SK-N-SH (cell line): ENCODE measurements at regions of chr2 and their contacts with region 1.

Region 1: GRCh38 chr2:26144953-26145680 is 27.8 kb upstream of the GAREM2 start:
- DNase-seq: peak; percentile 85
- H3K4me3 ChIP-seq: no peak overlapping the region
- H3K27ac ChIP-seq: no peak overlapping the region
- H3K4me1 ChIP-seq: no peaks in the 10 kb centered on the region; a peak in 1 of 4 replicates
- H3K27me3 ChIP-seq: no peaks in the 10 kb centered on the region; the same call in 1 of the 2 replicates
- CTCF ChIP-seq: peak; percentile 96
- EP300 ChIP-seq: no peak
- RAD21 ChIP-seq: peak; percentile 100

Region 2: GRCh38 chr2:25851740-25852503 is 293.2 kb before region 1 on chr2:
- CTCF ChIA-PET with region 1: interaction called, 24 read pairs
- POLR2A ChIA-PET with region 1: no interaction called
- DNase-seq: peak; percentile 63
- H3K4me3 ChIP-seq: no peak overlapping the region
- H3K27ac ChIP-seq: peak overlapping the region in 1 of 2 experiments; percentile 33; a peak in 2 of 4 replicates
- H3K4me1 ChIP-seq: peaks cover 4 to 10% of the 10 kb centered on the region in 2 experiments; a peak in 3 of 4 replicates
- H3K27me3 ChIP-seq: no peaks in the 10 kb centered on the region
- CTCF ChIP-seq: peak; percentile 94
- EP300 ChIP-seq: no peak
- RAD21 ChIP-seq: peak; percentile 83

Region 3: GRCh38 chr2:25976983-25977741 is 168.0 kb before region 1 on chr2:
- CTCF ChIA-PET with region 1: interaction called, 13 read pairs
- POLR2A ChIA-PET with region 1: no interaction called
- DNase-seq: peak; percentile 65
- H3K4me3 ChIP-seq: peak overlapping the region; percentile 7 to 24; a peak in 3 of 4 replicates
- H3K27ac ChIP-seq: peak overlapping the region; percentile 50 to 67
- H3K4me1 ChIP-seq: peaks cover 51 to 53% of the 10 kb centered on the region in 2 experiments
- H3K27me3 ChIP-seq: no peaks in the 10 kb centered on the region
- CTCF ChIP-seq: no peak
- EP300 ChIP-seq: no peak
- RAD21 ChIP-seq: no peak

Region 4: GRCh38 chr2:25991965-25992364 is 153.2 kb before region 1 on chr2:
- CTCF ChIA-PET with region 1: interaction called, 96 read pairs
- POLR2A ChIA-PET with region 1: no interaction called
- DNase-seq: no peak
- H3K4me3 ChIP-seq: no peak overlapping the region
- H3K27ac ChIP-seq: no peak overlapping the region
- H3K4me1 ChIP-seq: no peaks in the 10 kb centered on the region; a peak in 1 of 4 replicates
- H3K27me3 ChIP-seq: no peaks in the 10 kb centered on the region
- CTCF ChIP-seq: no peak
- EP300 ChIP-seq: no peak
- RAD21 ChIP-seq: no peak

Region 5: GRCh38 chr2:26033818-26034636 is 111.1 kb before region 1 on chr2 and contains the start of gene RAB10:
- CTCF ChIA-PET with region 1: interaction called, 23 read pairs
- POLR2A ChIA-PET with region 1: no interaction called
- DNase-seq: peak; percentile 99
- H3K4me3 ChIP-seq: peak within 1 kb of the TSS; percentile 82 to 90
- H3K27ac ChIP-seq: peak within 1 kb of the TSS; percentile 91 to 94
- H3K4me1 ChIP-seq: peaks cover 4 to 11% of the 10 kb centered on the region in 2 experiments; a peak in 3 of 4 replicates
- H3K27me3 ChIP-seq: no peaks in the 10 kb centered on the region
- CTCF ChIP-seq: no peak
- EP300 ChIP-seq: 0 out of 4 replicates have a peak, but pooled peaks of 1 of the 2 experiments have one; percentile 7
- RAD21 ChIP-seq: 0 out of 2 replicates have a peak, but pooled peaks have one; percentile 7
- polyA plus RNA-seq, gene RAB10: 47.5 and 57.5 TPM in 2 replicates

Region 6: GRCh38 chr2:26099933-26100332 is 45.2 kb before region 1 on chr2:
- CTCF ChIA-PET with region 1: interaction called, 15 read pairs
- POLR2A ChIA-PET with region 1: no interaction called
- DNase-seq: no peak
- H3K4me3 ChIP-seq: no peak overlapping the region
- H3K27ac ChIP-seq: no peak overlapping the region
- H3K4me1 ChIP-seq: no peaks in the 10 kb centered on the region; a peak in 1 of 4 replicates
- H3K27me3 ChIP-seq: no peaks in the 10 kb centered on the region
- CTCF ChIP-seq: no peak
- EP300 ChIP-seq: no peak
- RAD21 ChIP-seq: no peak

Region 7: GRCh38 chr2:26126074-26126473 is 19.0 kb before region 1 on chr2:
- CTCF ChIA-PET with region 1: interaction called, 35 read pairs
- POLR2A ChIA-PET with region 1: no interaction called
- DNase-seq: no peak
- H3K4me3 ChIP-seq: no peak overlapping the region
- H3K27ac ChIP-seq: no peak overlapping the region
- H3K4me1 ChIP-seq: peaks cover 0 to 4% of the 10 kb centered on the region in 2 experiments; a peak in 1 of 4 replicates
- H3K27me3 ChIP-seq: no peaks in the 10 kb centered on the region
- CTCF ChIP-seq: no peak
- EP300 ChIP-seq: no peak
- RAD21 ChIP-seq: no peak